Activated naive CD4-positive, alpha-beta T cell treated with anti-CD3 and anti-CD28 coated beads for 36 hours (primary cell): ENCODE measurements at regions of chr15 and their contacts with region 1.

Region 1: GRCh38 chr15:44728576-44729407 is 7.5 kb upstream of the TRIM69 start:
- DNase-seq: peak; percentile 97
- H3K4me3 Mint-ChIP-seq: peak overlapping the region; percentile 97
- H3K27ac Mint-ChIP-seq: peak overlapping the region; percentile 99
- H3K4me1 Mint-ChIP-seq: peaks cover 69% of the 10 kb centered on the region
- H3K27me3 Mint-ChIP-seq: no peaks in the 10 kb centered on the region

Region 2: GRCh38 chr15:44015545-44016305 is 713.1 kb before region 1 on chr15:
- CTCF ChIA-PET with region 1: no interaction called
- intact Hi-C with region 1: no loop called
- DNase-seq: no peak
- H3K4me3 Mint-ChIP-seq: no peak overlapping the region
- H3K27ac Mint-ChIP-seq: no peak overlapping the region
- H3K4me1 Mint-ChIP-seq: no peaks in the 10 kb centered on the region
- H3K27me3 Mint-ChIP-seq: peaks cover 12% of the 10 kb centered on the region

Region 3: DNA sequence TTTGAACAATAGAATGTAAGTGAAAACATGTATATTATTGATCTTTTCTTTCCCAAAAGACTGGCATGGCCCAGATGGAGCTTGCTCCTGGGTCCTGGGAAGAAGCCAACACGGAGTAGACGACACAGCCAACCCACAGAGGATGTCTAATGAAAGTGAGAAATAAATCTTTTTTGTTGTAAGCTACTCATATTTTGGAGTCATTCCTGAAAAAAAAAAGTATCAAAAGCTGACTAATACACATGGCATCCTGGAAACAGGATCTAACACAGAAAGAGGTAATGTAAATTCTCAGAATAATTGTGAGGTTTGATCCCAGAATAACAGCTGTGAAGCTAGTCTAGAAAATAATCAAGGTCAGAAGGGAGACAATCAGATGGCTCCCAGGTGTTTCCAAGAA is 521.1 kb before region 1 on chr15:
- CTCF ChIA-PET with region 1: no interaction called
- intact Hi-C with region 1: no loop called
- DNase-seq: no peak
- H3K4me3 Mint-ChIP-seq: no peak overlapping the region
- H3K27ac Mint-ChIP-seq: no peak overlapping the region
- H3K4me1 Mint-ChIP-seq: no peaks in the 10 kb centered on the region
- H3K27me3 Mint-ChIP-seq: peaks cover 7% of the 10 kb centered on the region

Region 4: DNA sequence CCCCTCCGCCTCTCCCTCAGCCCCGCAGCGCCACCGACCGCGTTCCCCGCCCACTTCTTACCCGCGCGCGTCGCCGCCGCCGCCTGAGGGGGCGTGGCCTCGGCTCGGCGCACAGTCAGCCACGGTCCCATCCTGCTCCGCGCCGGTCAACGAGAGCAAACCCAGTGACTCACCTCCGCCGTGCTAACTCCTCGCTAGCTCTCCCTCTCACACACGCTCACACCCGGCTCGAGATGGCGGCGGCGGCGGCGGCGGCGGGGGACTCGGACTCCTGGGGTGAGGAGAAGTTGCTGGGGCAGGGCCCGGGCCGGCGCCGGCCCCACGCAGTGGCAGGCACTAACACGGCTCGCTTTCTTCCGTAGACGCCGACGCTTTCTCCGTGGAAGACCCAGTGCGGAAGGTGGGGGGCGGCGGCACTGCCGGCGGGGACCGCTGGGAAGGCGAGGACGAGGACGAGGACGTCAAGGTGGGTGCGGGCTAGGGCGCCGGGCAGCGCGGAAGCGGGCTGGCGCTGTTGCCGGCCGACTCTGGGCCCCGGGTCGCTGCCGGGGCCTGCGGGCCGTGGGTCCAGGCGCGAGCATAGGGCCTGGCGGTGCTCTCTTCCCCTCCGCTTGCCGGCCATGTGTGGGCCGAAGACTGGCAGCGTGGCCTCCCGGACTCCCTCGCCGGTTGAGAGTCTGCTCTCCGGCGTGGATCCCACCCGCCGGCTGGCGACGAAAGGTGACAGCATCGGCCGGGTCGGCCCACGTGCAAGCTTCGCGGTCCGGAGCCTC is 191.6 kb before region 1 on chr15 and contains the start of gene EIF3J:
- CTCF ChIA-PET with region 1: no interaction called
- intact Hi-C with region 1: loop called (anchors 2 kb)
- DNase-seq: peak; percentile 96
- H3K4me3 Mint-ChIP-seq: peak within 1 kb of the TSS; percentile 84
- H3K27ac Mint-ChIP-seq: peak within 1 kb of the TSS; percentile 95
- H3K4me1 Mint-ChIP-seq: peaks cover 48% of the 10 kb centered on the region
- H3K27me3 Mint-ChIP-seq: no peaks in the 10 kb centered on the region
- total RNA-seq, gene EIF3J: 75.8 to 77.9 TPM

Region 5: GRCh38 chr15:44676676-44677075 is 52.1 kb before region 1 on chr15:
- CTCF ChIA-PET with region 1: interaction called, 4 read pairs
- intact Hi-C with region 1: loop called (anchors 2 kb)
- DNase-seq: peak; percentile 66
- H3K4me3 Mint-ChIP-seq: peak overlapping the region; percentile 55
- H3K27ac Mint-ChIP-seq: peak overlapping the region; percentile 86
- H3K4me1 Mint-ChIP-seq: peaks cover 81% of the 10 kb centered on the region
- H3K27me3 Mint-ChIP-seq: no peaks in the 10 kb centered on the region

Region 6: DNA sequence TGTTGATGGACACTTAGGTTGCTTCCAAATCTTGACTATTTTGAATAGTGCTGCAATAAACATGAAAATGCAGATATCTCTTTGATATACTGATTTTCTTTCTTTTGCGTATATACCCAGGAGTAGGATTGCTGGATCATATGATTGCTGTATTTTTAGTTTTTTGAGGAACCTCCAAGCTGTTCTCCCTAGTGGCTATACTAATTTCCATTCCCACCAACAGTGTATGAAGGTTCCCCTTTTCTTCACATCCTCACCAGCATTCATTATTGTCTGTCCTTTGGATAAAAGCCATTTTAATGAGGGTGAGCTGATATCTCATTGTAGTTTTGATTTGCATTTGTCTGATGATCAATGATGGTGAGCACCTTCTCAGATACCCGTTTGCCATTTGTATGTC is 30.2 kb before region 1 on chr15:
- CTCF ChIA-PET with region 1: no interaction called
- intact Hi-C with region 1: no loop called
- DNase-seq: no peak
- H3K4me3 Mint-ChIP-seq: no peak overlapping the region
- H3K27ac Mint-ChIP-seq: no peak overlapping the region
- H3K4me1 Mint-ChIP-seq: peaks cover 23% of the 10 kb centered on the region
- H3K27me3 Mint-ChIP-seq: no peaks in the 10 kb centered on the region

Region 7: GRCh38 chr15:44753345-44753744 is 24.6 kb after region 1 on chr15:
- CTCF ChIA-PET with region 1: no interaction called
- intact Hi-C with region 1: loop called (anchors 2 kb)
- DNase-seq: no peak
- H3K4me3 Mint-ChIP-seq: no peak overlapping the region
- H3K27ac Mint-ChIP-seq: no peak overlapping the region
- H3K4me1 Mint-ChIP-seq: peaks cover 27% of the 10 kb centered on the region
- H3K27me3 Mint-ChIP-seq: no peaks in the 10 kb centered on the region

Region 8: DNA sequence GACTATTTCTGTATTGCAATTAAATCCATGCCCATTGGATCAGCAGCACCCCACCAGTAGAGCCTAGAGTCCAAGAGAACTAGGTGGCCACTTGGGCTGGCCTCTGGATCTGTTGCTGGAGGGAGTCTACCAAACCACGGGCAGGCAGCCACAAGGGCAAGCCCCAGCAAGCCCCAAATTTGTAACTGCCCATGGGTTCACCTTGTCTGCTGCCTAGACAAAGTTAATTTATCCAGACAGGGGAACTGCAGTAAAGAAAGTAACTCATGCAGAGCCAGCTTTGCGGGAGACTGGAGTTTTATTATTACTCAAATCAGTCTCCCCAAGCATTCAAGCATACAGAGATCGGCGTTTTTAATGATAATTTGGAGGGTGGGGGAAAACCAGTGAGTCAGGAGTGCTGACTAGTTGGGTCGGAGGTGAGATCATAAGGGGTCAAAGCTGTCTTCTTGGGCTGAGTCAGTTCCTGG is 153.7 kb after region 1 on chr15:
- CTCF ChIA-PET with region 1: no interaction called
- intact Hi-C with region 1: loop called (anchors 1 kb)
- DNase-seq: peak; percentile 74
- H3K4me3 Mint-ChIP-seq: no peak overlapping the region
- H3K27ac Mint-ChIP-seq: no peak overlapping the region
- H3K4me1 Mint-ChIP-seq: peaks cover 25% of the 10 kb centered on the region
- H3K27me3 Mint-ChIP-seq: peaks cover 5% of the 10 kb centered on the region